ENCODE measurements at regions of chr1 and their contacts with region 1.

Region 1: GRCh38 chr1:64986903-64987871 is 20.8 kb upstream of the JAK1 start:
- DNase-seq: peak; percentile 23
- H3K4me3 ChIP-seq: no peak overlapping the region
- H3K27ac ChIP-seq: no peak overlapping the region
- H3K4me1 ChIP-seq: peaks cover 15% of the 10 kb centered on the region
- H3K27me3 ChIP-seq: no peaks in the 10 kb centered on the region
- CTCF ChIP-seq: no peak

Region 2: DNA sequence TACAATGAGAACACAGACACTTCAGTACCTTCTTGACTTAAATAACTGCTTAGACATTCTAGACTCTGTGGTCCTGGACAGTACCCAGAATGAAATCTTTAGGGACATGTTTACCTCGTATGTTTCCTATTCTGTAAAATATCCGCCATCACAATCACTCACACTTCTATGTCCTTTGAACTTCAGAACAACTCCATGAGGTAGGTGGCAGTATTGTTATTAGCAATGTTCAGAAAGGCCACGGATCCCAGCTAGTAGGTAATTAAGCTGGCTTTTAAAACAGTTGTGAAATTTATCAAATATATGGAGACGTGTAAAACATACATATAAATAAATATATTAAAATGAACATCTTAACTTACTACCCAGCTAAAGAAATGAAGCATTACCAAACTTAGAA is 433.9 kb before region 1 on chr1:
- CTCF ChIA-PET with region 1: no interaction called
- dilution Hi-C with region 1: no loop called
- in situ Hi-C with region 1: no loop called
- intact Hi-C with region 1: no loop called
- DNase-seq: no peak
- H3K4me3 ChIP-seq: no peak overlapping the region
- H3K27ac ChIP-seq: no peak overlapping the region
- H3K4me1 ChIP-seq: no peaks in the 10 kb centered on the region
- H3K27me3 ChIP-seq: no peaks in the 10 kb centered on the region
- CTCF ChIP-seq: peak in 1 of 2 donors; percentile 23

Region 3: GRCh38 chr1:64572222-64572900 is 414.8 kb before region 1 on chr1:
- CTCF ChIA-PET with region 1: no interaction called
- dilution Hi-C with region 1: no loop called
- in situ Hi-C with region 1: no loop called
- intact Hi-C with region 1: no loop called
- DNase-seq: peak; percentile 29
- H3K4me3 ChIP-seq: no peak overlapping the region
- H3K27ac ChIP-seq: no peak overlapping the region
- H3K4me1 ChIP-seq: peaks cover 8% of the 10 kb centered on the region
- H3K27me3 ChIP-seq: no peaks in the 10 kb centered on the region
- CTCF ChIP-seq: no peak

Region 4: GRCh38 chr1:64906447-64906846 is 80.7 kb before region 1 on chr1:
- CTCF ChIA-PET with region 1: no interaction called
- dilution Hi-C with region 1: loop called (anchors 5 kb)
- in situ Hi-C with region 1: no loop called
- intact Hi-C with region 1: no loop called
- DNase-seq: no peak
- H3K4me3 ChIP-seq: no peak overlapping the region
- H3K27ac ChIP-seq: no peak overlapping the region
- H3K4me1 ChIP-seq: peaks cover 12% of the 10 kb centered on the region
- H3K27me3 ChIP-seq: no peaks in the 10 kb centered on the region
- CTCF ChIP-seq: no peak

Region 5: GRCh38 chr1:64948905-64949833 is 38.0 kb before region 1 on chr1:
- CTCF ChIA-PET with region 1: no interaction called
- dilution Hi-C with region 1: loop called (anchors 5 kb)
- in situ Hi-C with region 1: no loop called
- intact Hi-C with region 1: no loop called
- DNase-seq: peak; percentile 71
- H3K4me3 ChIP-seq: no peak overlapping the region
- H3K27ac ChIP-seq: peak overlapping the region; percentile 81
- H3K4me1 ChIP-seq: peaks cover 15% of the 10 kb centered on the region
- H3K27me3 ChIP-seq: no peaks in the 10 kb centered on the region
- CTCF ChIP-seq: no peak

Region 6: DNA sequence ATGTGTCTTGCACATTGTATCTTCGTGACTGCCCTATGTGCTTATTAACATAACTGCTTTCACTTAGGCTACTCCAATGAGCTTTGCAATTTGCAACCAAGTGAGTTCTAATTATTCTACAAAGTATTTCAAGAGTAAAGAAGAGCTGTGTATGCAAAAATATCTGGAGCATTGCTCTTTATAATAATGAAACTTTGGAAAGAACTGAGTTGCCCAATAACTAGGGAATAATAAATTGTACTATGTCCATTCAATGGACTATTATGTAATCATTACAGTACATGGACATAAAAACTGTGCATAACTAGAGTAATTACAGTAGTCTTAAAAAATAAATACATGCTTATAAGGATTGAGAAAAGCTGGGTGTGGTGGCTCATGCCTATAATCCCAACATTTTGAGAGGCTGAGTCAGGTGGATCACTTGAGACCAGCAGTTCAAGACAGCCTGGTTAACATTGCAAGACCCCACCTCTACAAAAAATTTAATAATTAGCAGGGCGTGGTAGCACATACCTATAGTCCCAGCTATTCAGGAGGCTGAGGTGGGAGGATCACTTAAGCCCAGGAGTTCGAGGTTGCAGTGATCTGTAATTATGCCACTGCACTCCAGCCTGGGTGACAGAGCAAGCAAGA is 49.5 kb after region 1 on chr1:
- CTCF ChIA-PET with region 1: no interaction called
- dilution Hi-C with region 1: no loop called
- in situ Hi-C with region 1: no loop called
- intact Hi-C with region 1: no loop called
- DNase-seq: peak; percentile 22
- H3K4me3 ChIP-seq: no peak overlapping the region
- H3K27ac ChIP-seq: no peak overlapping the region
- H3K4me1 ChIP-seq: no peaks in the 10 kb centered on the region
- H3K27me3 ChIP-seq: no peaks in the 10 kb centered on the region
- CTCF ChIP-seq: no peak

Region 7: GRCh38 chr1:65449214-65449842 is 462.1 kb after region 1 on chr1:
- CTCF ChIA-PET with region 1: no interaction called
- dilution Hi-C with region 1: no loop called
- in situ Hi-C with region 1: no loop called
- intact Hi-C with region 1: no loop called
- DNase-seq: no peak
- H3K4me3 ChIP-seq: no peak overlapping the region
- H3K27ac ChIP-seq: no peak overlapping the region
- H3K4me1 ChIP-seq: no peaks in the 10 kb centered on the region
- H3K27me3 ChIP-seq: no peaks in the 10 kb centered on the region
- CTCF ChIP-seq: peak in 1 of 2 donors; percentile 24

Measured in mammary epithelial cell (primary cell).